B cell (primary cell): ENCODE measurements at regions of chr17 and their contacts with region 1.

Region 1: DNA sequence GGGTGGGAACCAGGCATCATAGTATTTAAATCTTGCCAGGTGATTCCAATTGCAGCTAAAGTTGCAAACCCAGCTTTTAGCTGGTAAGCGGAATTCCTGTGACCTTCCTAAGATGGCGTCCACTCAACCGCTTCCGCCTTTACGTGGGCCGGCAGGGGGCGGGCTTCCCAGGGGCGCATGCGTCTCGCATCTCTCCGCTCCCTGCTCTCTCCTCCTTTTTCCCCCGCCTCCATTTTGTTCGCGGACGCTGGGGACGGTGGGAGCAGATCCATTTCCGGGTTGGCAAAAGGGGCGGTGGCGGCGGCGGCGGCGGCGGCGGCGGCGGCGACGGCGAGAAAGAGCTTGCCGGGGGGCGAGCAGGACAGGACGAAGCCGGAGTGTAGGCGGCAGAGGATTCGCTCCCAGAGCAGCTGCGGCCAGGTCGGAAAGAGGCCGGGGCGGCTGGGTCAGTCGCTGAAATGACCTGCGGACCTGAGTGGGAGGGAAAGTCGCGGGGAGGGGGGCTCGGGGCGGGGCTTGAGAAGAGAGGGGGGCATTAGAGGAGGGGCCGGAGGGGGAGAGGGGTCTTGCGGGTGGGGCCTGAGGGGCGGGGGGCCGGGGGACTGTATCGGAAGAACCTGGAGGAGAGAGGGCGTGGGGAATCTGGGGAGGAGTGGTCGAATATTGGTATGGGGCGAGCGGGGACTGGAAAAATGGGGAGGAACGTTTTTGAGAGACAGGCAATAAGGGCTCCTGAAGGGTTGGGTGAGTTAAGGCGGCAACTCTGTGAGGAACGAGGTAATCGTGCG is at the start of gene WIPF2:
- DNase-seq: peak; percentile 97
- ATAC-seq: peak; percentile 86
- H3K4me3 ChIP-seq: peak within 1 kb of the TSS; percentile 57 to 94 (median 82)
- H3K4me3 Mint-ChIP-seq: peak within 1 kb of the TSS; percentile 93
- H3K27ac ChIP-seq: peak within 1 kb of the TSS; percentile 92 to 100
- H3K27ac Mint-ChIP-seq: peak within 1 kb of the TSS; percentile 99
- H3K4me1 ChIP-seq: peaks cover 12 to 21% of the 10 kb centered on the region in 2 donors
- H3K4me1 Mint-ChIP-seq: peaks cover 36% of the 10 kb centered on the region
- H3K27me3 ChIP-seq: no peaks in the 10 kb centered on the region
- H3K27me3 Mint-ChIP-seq: no peaks in the 10 kb centered on the region
- CTCF ChIP-seq: peak; percentile 71
- total RNA-seq, gene WIPF2: 46.6 and 48.4 TPM in 2 replicates

Region 2: DNA sequence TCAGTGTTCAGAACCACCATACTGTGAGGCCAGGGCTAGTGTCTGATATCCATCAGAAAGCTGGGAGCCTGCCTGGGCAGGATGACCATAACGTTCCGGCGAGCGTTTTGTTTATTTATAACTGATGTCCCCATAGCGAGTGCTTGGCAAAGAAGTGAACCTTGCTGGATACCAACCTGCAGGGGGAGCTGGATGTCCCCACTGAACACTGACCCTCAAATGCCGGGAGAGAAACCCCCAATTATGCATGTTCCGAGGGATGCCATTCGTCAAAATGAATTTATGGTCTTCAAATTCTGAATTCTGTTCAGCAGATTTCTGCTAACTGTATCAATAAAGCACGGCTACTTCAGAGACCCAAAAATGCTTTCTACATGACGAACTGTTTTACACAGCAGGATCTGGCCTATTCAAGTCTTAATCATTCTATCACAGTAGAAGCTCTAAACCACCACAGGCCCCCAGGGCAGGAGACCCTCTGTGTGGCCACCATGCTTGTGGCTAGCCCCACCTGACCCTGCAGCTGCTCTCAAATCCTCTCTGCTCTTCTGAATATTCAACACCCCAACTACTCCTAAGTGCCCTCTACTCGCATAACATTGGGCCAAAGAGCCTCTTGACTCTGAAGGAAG is 180.3 kb before region 1 on chr17:
- CTCF ChIA-PET with region 1: no interaction called
- POLR2A ChIA-PET with region 1: no interaction called
- intact Hi-C with region 1: no loop called
- DNase-seq: no peak
- ATAC-seq: no peak
- H3K4me3 ChIP-seq: no peak overlapping the region
- H3K4me3 Mint-ChIP-seq: no peak overlapping the region
- H3K27ac ChIP-seq: no peak overlapping the region
- H3K27ac Mint-ChIP-seq: no peak overlapping the region
- H3K4me1 ChIP-seq: no peaks in the 10 kb centered on the region
- H3K4me1 Mint-ChIP-seq: no peaks in the 10 kb centered on the region
- H3K27me3 ChIP-seq: no peaks in the 10 kb centered on the region
- H3K27me3 Mint-ChIP-seq: no peaks in the 10 kb centered on the region
- CTCF ChIP-seq: peak; percentile 28

Region 3: DNA sequence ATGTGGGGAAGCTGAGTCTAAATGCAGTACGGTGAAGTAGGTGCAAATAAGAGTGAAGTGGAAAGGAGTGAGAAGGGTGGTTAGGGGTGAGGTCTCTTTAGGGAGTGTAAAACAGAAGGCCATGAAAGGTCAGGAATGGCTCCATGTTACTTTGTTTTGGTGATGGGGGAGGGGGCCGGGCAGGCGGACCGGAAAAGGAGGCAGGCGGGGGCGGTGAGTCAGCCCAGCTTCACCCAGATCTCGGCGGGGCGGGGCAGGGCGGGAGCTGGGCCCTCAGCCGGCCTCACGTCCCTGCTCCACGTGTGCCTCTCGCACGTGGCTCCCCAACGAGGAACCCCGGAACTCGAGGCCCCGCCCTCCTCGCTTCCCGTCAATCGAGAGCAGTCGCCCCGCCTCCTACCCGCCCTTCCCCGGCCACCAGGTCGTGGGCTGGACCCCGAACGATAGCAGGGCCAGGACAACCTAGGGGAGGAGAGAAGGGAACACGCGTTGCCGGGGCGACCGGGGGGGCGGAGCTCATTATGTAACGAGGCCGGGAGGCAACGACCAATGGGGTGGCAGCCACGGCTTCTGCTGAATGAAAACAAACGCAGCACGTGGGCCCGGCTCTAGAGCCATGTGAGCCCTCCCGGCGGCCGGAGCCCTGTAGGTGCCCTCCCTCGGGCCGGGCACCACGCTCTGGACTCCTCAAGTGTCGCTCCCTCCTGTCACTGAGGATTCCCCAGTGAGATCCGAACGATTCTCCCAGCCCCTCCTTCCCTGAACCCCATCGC is 120.2 kb before region 1 on chr17:
- CTCF ChIA-PET with region 1: no interaction called
- POLR2A ChIA-PET with region 1: interaction called, 3 read pairs
- intact Hi-C with region 1: loop called (anchors 1 kb)
- DNase-seq: peak; percentile 98
- ATAC-seq: peak; percentile 64
- H3K4me3 ChIP-seq: peak overlapping the region; percentile 51 to 91 (median 78)
- H3K4me3 Mint-ChIP-seq: peak overlapping the region; percentile 77
- H3K27ac ChIP-seq: peak overlapping the region; percentile 92 to 93
- H3K27ac Mint-ChIP-seq: peak overlapping the region; percentile 89
- H3K4me1 ChIP-seq: peaks cover 53 to 70% of the 10 kb centered on the region in 2 donors
- H3K4me1 Mint-ChIP-seq: peaks cover 74% of the 10 kb centered on the region
- H3K27me3 ChIP-seq: no peaks in the 10 kb centered on the region
- H3K27me3 Mint-ChIP-seq: no peaks in the 10 kb centered on the region
- CTCF ChIP-seq: no peak

Region 4: DNA sequence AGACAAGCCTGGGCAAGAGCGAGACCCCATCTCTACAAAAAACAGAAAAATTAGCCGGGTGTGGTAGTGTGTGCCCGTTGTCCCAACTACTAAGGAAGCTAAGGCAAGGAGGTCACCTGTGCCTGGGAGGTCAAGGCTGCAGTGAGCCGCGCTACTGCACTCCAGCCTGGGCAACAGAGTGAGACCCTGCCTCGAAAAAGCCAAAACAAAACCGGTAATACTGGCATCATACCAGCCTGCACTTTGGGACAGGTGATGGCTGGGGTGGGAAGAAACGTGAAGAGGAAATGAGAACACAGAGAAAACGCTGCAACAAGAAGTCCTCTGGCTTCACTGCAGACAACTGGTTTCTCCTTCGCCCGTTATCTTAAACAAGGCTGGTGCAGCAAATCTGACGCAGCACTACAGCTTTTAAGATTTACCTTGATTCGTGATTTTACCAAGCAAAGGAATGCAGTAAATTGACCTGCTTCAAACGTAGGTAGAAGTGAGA is 79.7 kb before region 1 on chr17:
- CTCF ChIA-PET with region 1: no interaction called
- POLR2A ChIA-PET with region 1: interaction called, 5 read pairs
- intact Hi-C with region 1: loop called (anchors 1 kb)
- DNase-seq: no peak
- ATAC-seq: peak; percentile 1
- H3K4me3 ChIP-seq: peak overlapping the region; percentile 74 to 93 (median 84)
- H3K4me3 Mint-ChIP-seq: peak overlapping the region; percentile 94
- H3K27ac ChIP-seq: peak overlapping the region; percentile 94 to 95
- H3K27ac Mint-ChIP-seq: peak overlapping the region; percentile 98
- H3K4me1 ChIP-seq: peaks cover 19 to 24% of the 10 kb centered on the region in 2 donors
- H3K4me1 Mint-ChIP-seq: peaks cover 23% of the 10 kb centered on the region
- H3K27me3 ChIP-seq: no peaks in the 10 kb centered on the region
- H3K27me3 Mint-ChIP-seq: no peaks in the 10 kb centered on the region
- CTCF ChIP-seq: no peak

Region 5: DNA sequence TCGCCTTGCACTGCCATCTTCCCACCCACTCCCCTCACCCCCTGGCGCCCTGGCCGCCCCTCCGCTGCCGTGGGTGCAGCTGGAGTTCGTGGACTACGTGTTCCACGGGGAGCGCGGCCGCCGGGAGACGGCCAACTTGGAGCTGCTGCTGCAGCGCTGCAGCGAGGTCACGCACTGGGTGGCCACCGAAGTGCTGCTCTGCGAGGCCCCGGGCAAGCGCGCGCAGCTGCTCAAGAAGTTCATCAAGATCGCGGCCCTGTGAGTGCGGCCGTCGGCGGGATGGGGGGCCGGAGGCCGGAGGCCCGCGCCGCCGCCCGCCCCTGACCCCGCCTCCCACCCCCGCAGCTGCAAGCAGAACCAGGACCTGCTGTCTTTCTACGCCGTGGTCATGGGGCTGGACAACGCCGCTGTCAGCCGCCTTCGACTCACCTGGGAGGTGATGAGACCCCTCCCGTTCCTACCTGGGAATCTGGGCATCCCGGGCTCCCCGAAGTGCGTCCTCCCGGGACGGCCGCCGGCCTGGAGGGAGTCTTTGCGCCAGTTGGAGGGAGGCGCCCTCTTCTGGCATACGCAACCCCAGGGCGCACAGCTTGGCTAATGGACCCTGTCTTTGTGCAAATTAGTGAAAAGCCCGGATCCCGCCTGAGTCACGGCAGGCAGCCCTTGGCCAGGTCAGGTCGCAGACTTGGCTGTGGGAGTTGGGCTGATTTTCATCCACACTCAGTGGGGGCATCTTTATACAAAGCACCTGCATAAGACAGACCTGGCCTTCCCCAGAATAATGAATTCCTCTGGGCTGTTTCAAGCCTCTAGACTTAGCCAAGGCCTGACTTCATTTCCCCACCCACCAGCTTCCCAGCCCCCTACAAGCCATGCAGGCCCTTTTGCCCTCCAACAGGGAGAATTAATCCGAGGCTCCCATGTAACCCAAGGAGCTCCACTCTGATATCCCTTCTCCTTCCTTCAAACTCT is 27.7 kb before region 1 on chr17:
- CTCF ChIA-PET with region 1: interaction called, 28 read pairs
- POLR2A ChIA-PET with region 1: interaction called, 3 read pairs
- intact Hi-C with region 1: no loop called
- DNase-seq: peak; percentile 87
- ATAC-seq: peak; percentile 89
- H3K4me3 ChIP-seq: peak overlapping the region; percentile 17 to 76 (median 60)
- H3K4me3 Mint-ChIP-seq: peak overlapping the region; percentile 99
- H3K27ac ChIP-seq: no peak overlapping the region
- H3K27ac Mint-ChIP-seq: peak overlapping the region; percentile 89
- H3K4me1 ChIP-seq: peaks cover 11 to 17% of the 10 kb centered on the region in 2 donors
- H3K4me1 Mint-ChIP-seq: peaks cover 23% of the 10 kb centered on the region
- H3K27me3 ChIP-seq: no peaks in the 10 kb centered on the region
- H3K27me3 Mint-ChIP-seq: no peaks in the 10 kb centered on the region
- CTCF ChIP-seq: peak; percentile 79

Region 6: GRCh38 chr17:40203131-40203530 is 16.1 kb before region 1 on chr17:
- CTCF ChIA-PET with region 1: interaction called, 18 read pairs
- POLR2A ChIA-PET with region 1: interaction called, 5 read pairs
- intact Hi-C with region 1: loop called (anchors 2 kb)
- DNase-seq: no peak
- ATAC-seq: no peak
- H3K4me3 ChIP-seq: no peak overlapping the region
- H3K4me3 Mint-ChIP-seq: no peak overlapping the region
- H3K27ac ChIP-seq: no peak overlapping the region
- H3K27ac Mint-ChIP-seq: no peak overlapping the region
- H3K4me1 ChIP-seq: no peaks in the 10 kb centered on the region
- H3K4me1 Mint-ChIP-seq: no peaks in the 10 kb centered on the region
- H3K27me3 ChIP-seq: peaks cover 0 to 4% (median 0%) of the 10 kb centered on the region in 4 experiments
- H3K27me3 Mint-ChIP-seq: peaks cover 9% of the 10 kb centered on the region
- CTCF ChIP-seq: no peak

Region 7: GRCh38 chr17:40287494-40288369 is 68.5 kb after region 1 on chr17 and contains the start of gene CDC6:
- CTCF ChIA-PET with region 1: interaction called, 6 read pairs
- POLR2A ChIA-PET with region 1: interaction called, 6 read pairs
- intact Hi-C with region 1: loop called (anchors 1 kb)
- DNase-seq: peak; percentile 99
- ATAC-seq: peak; percentile 95
- H3K4me3 ChIP-seq: peak within 1 kb of the TSS; percentile 27 to 85 (median 69)
- H3K4me3 Mint-ChIP-seq: peak within 1 kb of the TSS; percentile 97
- H3K27ac ChIP-seq: peak within 1 kb of the TSS in 1 of 2 donors; percentile 42
- H3K27ac Mint-ChIP-seq: peak within 1 kb of the TSS; percentile 70
- H3K4me1 ChIP-seq: peaks cover 9 to 11% of the 10 kb centered on the region in 2 donors
- H3K4me1 Mint-ChIP-seq: peaks cover 15% of the 10 kb centered on the region
- H3K27me3 ChIP-seq: no peaks in the 10 kb centered on the region
- H3K27me3 Mint-ChIP-seq: no peaks in the 10 kb centered on the region
- CTCF ChIP-seq: no peak
- total RNA-seq, gene CDC6: 0.63 and 2.2 TPM in 2 replicates

Region 8: GRCh38 chr17:40417609-40418427 is 198.6 kb after region 1 on chr17 and contains the start of gene TOP2A:
- CTCF ChIA-PET with region 1: no interaction called
- POLR2A ChIA-PET with region 1: no interaction called
- intact Hi-C with region 1: loop called (anchors 2 kb)
- DNase-seq: peak; percentile 99
- ATAC-seq: peak; percentile 99
- H3K4me3 ChIP-seq: peak within 1 kb of the TSS; percentile 63 to 93 (median 84)
- H3K4me3 Mint-ChIP-seq: peak within 1 kb of the TSS; percentile 89
- H3K27ac ChIP-seq: peak within 1 kb of the TSS; percentile 63 to 72
- H3K27ac Mint-ChIP-seq: peak within 1 kb of the TSS; percentile 86
- H3K4me1 ChIP-seq: peaks cover 7 to 17% of the 10 kb centered on the region in 2 donors
- H3K4me1 Mint-ChIP-seq: peaks cover 15% of the 10 kb centered on the region
- H3K27me3 ChIP-seq: no peaks in the 10 kb centered on the region
- H3K27me3 Mint-ChIP-seq: no peaks in the 10 kb centered on the region
- CTCF ChIP-seq: no peak
- total RNA-seq, gene TOP2A: 3.0 and 3.1 TPM in 2 replicates

Region 9: GRCh38 chr17:41442739-41443138 is 1223.5 kb after region 1 on chr17:
- CTCF ChIA-PET with region 1: no interaction called
- POLR2A ChIA-PET with region 1: no interaction called
- intact Hi-C with region 1: no loop called
- DNase-seq: no peak
- ATAC-seq: no peak
- H3K4me3 ChIP-seq: no peak overlapping the region
- H3K4me3 Mint-ChIP-seq: no peak overlapping the region
- H3K27ac ChIP-seq: no peak overlapping the region
- H3K27ac Mint-ChIP-seq: no peak overlapping the region
- H3K4me1 ChIP-seq: no peaks in the 10 kb centered on the region
- H3K4me1 Mint-ChIP-seq: no peaks in the 10 kb centered on the region
- H3K27me3 ChIP-seq: peaks cover 0 to 6% (median 0%) of the 10 kb centered on the region in 4 experiments
- H3K27me3 Mint-ChIP-seq: peaks cover 32% of the 10 kb centered on the region
- CTCF ChIP-seq: no peak